Activated CD4-positive, alpha-beta memory T cell treated with anti-CD3 and anti-CD28 coated beads for 36 hours (primary cell): ENCODE measurements at regions of chr3 and their contacts with region 1.

Region 1: GRCh38 chr3:49839193-49839809 is 17.1 kb downstream of the TRAIP start:
- DNase-seq: peak; percentile 85
- H3K4me3 Mint-ChIP-seq: no peak overlapping the region
- H3K27ac Mint-ChIP-seq: no peak overlapping the region
- H3K4me1 Mint-ChIP-seq: peaks cover 1% of the 10 kb centered on the region
- H3K27me3 Mint-ChIP-seq: no peaks in the 10 kb centered on the region

Region 2: DNA sequence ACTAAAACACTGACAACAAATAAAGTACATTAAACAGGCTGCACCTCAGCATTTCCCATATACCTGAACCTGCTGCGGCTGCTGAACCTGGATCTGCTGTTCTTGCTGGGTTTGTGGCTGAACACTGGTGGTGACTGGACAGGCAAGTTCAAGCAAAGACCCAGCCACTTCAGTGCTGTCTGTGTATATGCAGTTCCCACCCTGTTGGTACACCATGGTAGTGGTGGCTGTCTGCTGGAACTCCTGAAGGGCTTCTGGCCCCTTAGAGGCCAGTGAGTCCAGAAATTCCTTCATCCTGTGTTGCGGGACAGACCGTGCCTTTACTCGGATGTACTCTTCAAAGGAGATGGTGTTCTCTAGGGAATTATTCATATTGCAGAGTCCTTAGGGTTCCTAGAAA is 762.7 kb before region 1 on chr3:
- CTCF ChIA-PET with region 1: no interaction called
- POLR2A ChIA-PET with region 1: no interaction called
- intact Hi-C with region 1: no loop called
- DNase-seq: no peak
- H3K4me3 Mint-ChIP-seq: no peak overlapping the region
- H3K27ac Mint-ChIP-seq: no peak overlapping the region
- H3K4me1 Mint-ChIP-seq: peaks cover 7% of the 10 kb centered on the region
- H3K27me3 Mint-ChIP-seq: no peaks in the 10 kb centered on the region

Region 3: GRCh38 chr3:49689046-49689907 is 150.0 kb before region 1 on chr3 and contains the starts of genes MST1 and RNF123:
- CTCF ChIA-PET with region 1: no interaction called
- POLR2A ChIA-PET with region 1: no interaction called
- intact Hi-C with region 1: no loop called
- DNase-seq: peak; percentile 95
- H3K4me3 Mint-ChIP-seq: peak within 1 kb of the TSS; percentile 98
- H3K27ac Mint-ChIP-seq: peak within 1 kb of the TSS; percentile 85
- H3K4me1 Mint-ChIP-seq: peaks cover 32% of the 10 kb centered on the region
- H3K27me3 Mint-ChIP-seq: peaks cover 1% of the 10 kb centered on the region
- total RNA-seq, gene MST1: 8.1 to 8.2 TPM
- total RNA-seq, gene RNF123: 21.0 to 29.7 TPM

Region 4: DNA sequence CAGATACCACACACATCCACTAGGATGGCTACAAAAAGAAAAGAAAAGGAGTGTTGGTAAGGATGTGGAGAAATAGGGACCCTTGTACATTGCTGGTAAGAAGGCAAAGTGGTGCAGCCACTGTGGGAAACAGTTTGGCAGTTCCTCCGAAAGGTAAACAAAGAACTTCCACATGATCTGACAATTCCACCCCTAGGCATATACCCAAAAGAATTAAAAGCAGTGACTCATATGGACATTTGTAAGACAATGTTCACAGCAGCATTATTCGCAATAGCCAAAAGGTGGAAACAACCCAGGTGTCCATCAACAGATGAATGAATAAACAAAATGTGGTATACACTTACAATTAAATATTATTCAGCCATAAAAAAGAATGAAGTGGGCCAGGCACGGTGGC is 93.3 kb before region 1 on chr3:
- CTCF ChIA-PET with region 1: interaction called, 13 read pairs
- POLR2A ChIA-PET with region 1: no interaction called
- intact Hi-C with region 1: no loop called
- DNase-seq: no peak
- H3K4me3 Mint-ChIP-seq: no peak overlapping the region
- H3K27ac Mint-ChIP-seq: no peak overlapping the region
- H3K4me1 Mint-ChIP-seq: peaks cover 5% of the 10 kb centered on the region
- H3K27me3 Mint-ChIP-seq: no peaks in the 10 kb centered on the region

Region 5: GRCh38 chr3:49802719-49803464 is 36.4 kb before region 1 on chr3 and contains the start of gene INKA1:
- CTCF ChIA-PET with region 1: interaction called, 159 read pairs
- POLR2A ChIA-PET with region 1: interaction called, 9 read pairs
- intact Hi-C with region 1: loop called (anchors 1 kb)
- DNase-seq: peak; percentile 92
- H3K4me3 Mint-ChIP-seq: peak within 1 kb of the TSS; percentile 88
- H3K27ac Mint-ChIP-seq: peak within 1 kb of the TSS; percentile 82
- H3K4me1 Mint-ChIP-seq: peaks cover 37% of the 10 kb centered on the region
- H3K27me3 Mint-ChIP-seq: peaks cover 8% of the 10 kb centered on the region
- total RNA-seq, gene INKA1: 1.0 to 1.2 TPM

Region 6: GRCh38 chr3:49826016-49826415 is 13.3 kb before region 1 on chr3:
- CTCF ChIA-PET with region 1: interaction called, 13 read pairs
- POLR2A ChIA-PET with region 1: no interaction called
- intact Hi-C with region 1: no loop called
- DNase-seq: no peak
- H3K4me3 Mint-ChIP-seq: no peak overlapping the region
- H3K27ac Mint-ChIP-seq: no peak overlapping the region
- H3K4me1 Mint-ChIP-seq: no peaks in the 10 kb centered on the region
- H3K27me3 Mint-ChIP-seq: no peaks in the 10 kb centered on the region

Region 7: GRCh38 chr3:49906004-49906743 is 66.9 kb after region 1 on chr3:
- CTCF ChIA-PET with region 1: interaction called, 11 read pairs
- POLR2A ChIA-PET with region 1: no interaction called
- intact Hi-C with region 1: no loop called
- DNase-seq: peak; percentile 69
- H3K4me3 Mint-ChIP-seq: peak overlapping the region; percentile 18
- H3K27ac Mint-ChIP-seq: peak overlapping the region; percentile 83
- H3K4me1 Mint-ChIP-seq: peaks cover 22% of the 10 kb centered on the region
- H3K27me3 Mint-ChIP-seq: no peaks in the 10 kb centered on the region